CD4-positive, alpha-beta memory T cell (primary cell): ENCODE measurements at regions of chr7 and their contacts with region 1.

Region 1: DNA sequence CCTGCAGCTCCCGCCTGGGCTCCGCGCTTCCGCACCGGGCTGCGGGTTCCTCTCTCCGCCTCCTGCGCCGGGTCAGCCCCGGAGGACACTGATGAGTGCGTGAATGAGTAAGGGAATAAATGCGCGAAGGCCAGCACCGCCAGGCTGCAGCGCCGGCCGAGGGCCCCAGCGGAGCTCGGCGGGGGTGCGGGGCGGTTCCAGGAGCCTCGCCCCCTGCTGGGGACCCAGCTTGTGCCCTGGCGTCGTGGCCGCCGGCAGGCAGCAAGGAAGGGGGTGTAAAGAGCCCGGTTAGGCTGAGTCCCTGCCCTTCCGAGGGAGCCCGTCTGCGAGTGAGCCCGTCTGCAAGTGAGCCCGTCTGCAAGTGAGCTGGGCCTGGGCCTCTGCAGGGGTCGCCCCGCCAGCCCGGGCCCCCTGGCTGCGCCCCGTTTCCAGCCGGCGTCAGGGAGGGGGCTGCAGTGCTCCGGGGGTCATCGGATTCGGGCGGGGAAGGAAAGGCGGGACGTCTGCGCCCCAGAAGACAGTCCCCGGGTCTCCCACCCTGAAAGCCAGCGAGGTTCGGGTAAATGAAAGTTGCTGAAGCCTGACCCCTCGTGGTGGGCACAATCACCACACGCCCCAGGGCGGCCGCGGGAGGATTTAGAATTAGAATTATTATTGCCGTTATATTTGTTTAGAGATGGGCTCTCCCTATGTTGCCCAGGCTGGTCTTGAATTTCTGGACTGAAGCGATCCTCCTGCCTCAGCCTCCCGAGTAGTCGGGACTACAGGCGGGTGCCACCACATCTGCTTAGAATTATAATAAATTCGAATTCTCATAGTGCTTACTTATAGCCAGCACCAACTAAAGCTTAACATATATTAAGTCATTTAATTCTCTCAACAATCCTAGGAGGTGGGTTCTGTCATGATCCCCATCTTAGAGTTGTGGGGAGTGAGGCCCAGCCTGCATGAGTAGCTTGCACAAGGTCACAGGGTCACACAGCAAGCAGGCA is 8.6 kb upstream of the CRYGN start:
- DNase-seq: peak; percentile 77 to 87 (median 84)
- H3K4me3 ChIP-seq: peak overlapping the region; percentile 11 to 70
- H3K4me3 Mint-ChIP-seq: peak overlapping the region; percentile 80 to 92 (median 83)
- H3K27ac ChIP-seq: peak overlapping the region; percentile 58
- H3K27ac Mint-ChIP-seq: peak overlapping the region in 6 of 7 donors; percentile 64 to 82 (median 78)
- H3K4me1 ChIP-seq: peaks cover 4% of the 10 kb centered on the region
- H3K4me1 Mint-ChIP-seq: peaks cover 0 to 24% (median under 1%) of the 10 kb centered on the region in 4 donors
- H3K27me3 ChIP-seq: no peaks in the 10 kb centered on the region
- H3K27me3 Mint-ChIP-seq: peaks cover 0 to 1% of the 10 kb centered on the region in 2 donors

Region 2: GRCh38 chr7:151292850-151293249 is 155.7 kb before region 1 on chr7:
- CTCF ChIA-PET with region 1: no interaction called
- POLR2A ChIA-PET with region 1: no interaction called
- intact Hi-C with region 1: no loop called
- DNase-seq: no peak
- H3K4me3 ChIP-seq: no peak overlapping the region
- H3K4me3 Mint-ChIP-seq: no peak overlapping the region
- H3K27ac ChIP-seq: no peak overlapping the region
- H3K27ac Mint-ChIP-seq: no peak overlapping the region
- H3K4me1 ChIP-seq: no peaks in the 10 kb centered on the region
- H3K4me1 Mint-ChIP-seq: no peaks in the 10 kb centered on the region
- H3K27me3 ChIP-seq: no peaks in the 10 kb centered on the region
- H3K27me3 Mint-ChIP-seq: peaks cover 11 to 15% of the 10 kb centered on the region in 2 donors

Region 3: DNA sequence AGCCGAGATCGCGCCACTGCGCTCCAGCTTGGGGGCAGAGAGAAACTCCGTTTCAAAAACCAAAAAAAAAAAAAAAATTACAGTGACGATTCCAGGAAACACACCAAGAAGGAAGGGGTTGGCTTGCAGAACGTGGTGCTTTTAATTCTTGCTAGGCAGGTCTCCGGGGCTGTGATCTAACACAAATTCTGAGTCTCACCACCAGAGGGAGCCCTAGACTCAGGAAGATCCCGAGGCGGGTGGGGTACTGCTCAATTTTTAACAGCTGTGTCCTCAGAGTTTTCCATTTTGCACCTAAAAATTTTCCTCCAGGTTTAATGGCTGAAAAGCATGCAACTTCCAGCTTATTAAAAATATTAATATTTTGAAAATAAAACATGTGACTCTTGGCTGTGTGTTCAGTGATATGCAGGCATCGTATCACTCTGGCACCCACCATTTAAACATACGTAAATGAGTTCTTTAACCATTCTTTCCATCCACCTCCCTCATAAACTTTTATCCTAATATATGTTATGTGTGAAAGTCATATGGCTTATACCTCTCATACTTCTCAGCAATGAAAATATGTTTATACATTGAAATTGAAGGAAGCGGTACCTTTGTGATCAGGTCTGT is 133.4 kb before region 1 on chr7:
- CTCF ChIA-PET with region 1: interaction called, 121 read pairs
- POLR2A ChIA-PET with region 1: interaction called, 3 read pairs
- intact Hi-C with region 1: loop called (anchors 1 kb)
- DNase-seq: peak; percentile 80 to 82 (median 81)
- H3K4me3 ChIP-seq: no peak overlapping the region
- H3K4me3 Mint-ChIP-seq: peak overlapping the region in 5 of 8 donors; percentile 36 to 69 (median 66)
- H3K27ac ChIP-seq: no peak overlapping the region
- H3K27ac Mint-ChIP-seq: peak overlapping the region in 4 of 7 donors; percentile 38 to 80 (median 74)
- H3K4me1 ChIP-seq: peaks cover 4% of the 10 kb centered on the region
- H3K4me1 Mint-ChIP-seq: peaks cover 2 to 8% (median 5%) of the 10 kb centered on the region in 4 donors
- H3K27me3 ChIP-seq: no peaks in the 10 kb centered on the region
- H3K27me3 Mint-ChIP-seq: peaks cover 0 to 1% of the 10 kb centered on the region in 2 donors

Region 4: DNA sequence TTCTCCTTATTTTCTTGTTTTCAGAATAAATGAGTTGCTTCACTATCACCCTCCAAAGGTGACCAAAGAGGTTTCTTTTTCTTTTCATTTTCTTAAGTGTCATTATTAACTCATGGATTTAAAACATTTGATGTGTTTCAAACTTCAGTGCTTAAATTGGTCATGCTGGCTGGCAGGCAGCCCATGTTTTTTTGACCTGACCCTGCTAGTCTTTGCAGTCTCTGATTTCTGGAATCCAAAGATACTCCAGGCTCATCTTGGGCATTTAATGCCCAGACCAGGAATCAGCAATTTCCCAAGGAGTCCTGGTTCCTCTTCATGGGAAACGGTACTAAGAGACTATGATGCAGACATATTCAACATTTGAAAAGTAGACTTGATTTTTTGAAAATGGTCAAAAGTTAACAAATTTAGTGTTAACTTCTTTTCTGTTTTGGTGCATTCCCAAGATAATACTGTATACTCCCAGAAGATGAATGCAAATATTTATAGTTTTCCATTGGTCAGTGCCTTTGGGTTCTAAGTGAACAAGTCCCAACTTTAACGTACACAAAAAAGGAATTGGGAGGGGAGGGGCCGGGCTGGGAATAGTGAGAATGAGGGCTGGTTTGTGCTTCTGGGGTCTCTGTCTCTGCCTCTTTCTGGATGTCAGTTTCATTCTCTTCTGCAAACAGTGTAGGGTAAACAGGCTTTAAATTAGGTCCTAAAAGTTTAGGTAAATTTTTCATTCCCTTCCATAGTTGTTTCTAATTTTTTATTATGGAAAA is 87.2 kb before region 1 on chr7:
- CTCF ChIA-PET with region 1: interaction called, 398 read pairs
- POLR2A ChIA-PET with region 1: interaction called, 9 read pairs
- intact Hi-C with region 1: no loop called
- DNase-seq: no peak
- H3K4me3 ChIP-seq: no peak overlapping the region
- H3K4me3 Mint-ChIP-seq: no peak overlapping the region
- H3K27ac ChIP-seq: no peak overlapping the region
- H3K27ac Mint-ChIP-seq: peak overlapping the region in 1 of 7 donors; percentile 43
- H3K4me1 ChIP-seq: no peaks in the 10 kb centered on the region
- H3K4me1 Mint-ChIP-seq: peaks cover 0 to 6% (median 2%) of the 10 kb centered on the region in 4 donors
- H3K27me3 ChIP-seq: no peaks in the 10 kb centered on the region
- H3K27me3 Mint-ChIP-seq: no peaks in the 10 kb centered on the region

Region 5: DNA sequence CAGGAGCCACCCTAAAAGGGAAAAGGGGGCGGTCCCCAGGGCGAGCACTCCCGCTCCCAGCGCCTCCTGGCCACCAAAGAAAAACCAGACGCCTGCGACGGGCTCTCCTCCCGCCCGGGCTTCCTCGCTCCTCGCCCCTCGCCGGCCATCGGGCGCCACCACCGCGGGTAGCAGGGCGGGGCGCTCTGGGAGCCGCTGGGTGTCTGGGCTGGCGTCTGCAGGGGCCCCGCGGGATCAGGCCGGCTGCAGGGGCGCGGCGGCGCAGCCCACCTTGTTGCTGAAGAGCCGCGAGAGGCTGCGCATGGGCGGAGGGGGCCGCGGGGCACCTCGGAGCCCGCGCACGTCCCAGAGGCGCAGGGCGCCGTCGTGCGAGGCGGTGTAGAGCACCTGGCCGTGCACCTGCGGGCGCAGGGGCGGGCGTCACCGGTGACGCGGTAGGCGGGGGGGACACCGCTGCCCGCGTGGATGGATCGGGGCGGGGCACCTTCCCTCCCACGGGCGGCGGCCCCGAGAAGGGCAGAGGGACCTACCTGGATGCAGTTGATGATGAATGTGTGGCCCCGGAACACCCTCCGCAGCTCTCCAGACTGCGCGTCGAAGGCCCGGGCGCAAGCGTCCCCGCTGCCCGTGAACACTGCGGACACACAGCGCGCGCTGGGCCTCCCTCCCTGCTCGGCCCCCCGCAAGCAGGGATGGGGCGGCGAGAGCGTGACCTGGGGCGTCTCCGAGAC is 67.0 kb before region 1 on chr7:
- CTCF ChIA-PET with region 1: interaction called, 17 read pairs
- POLR2A ChIA-PET with region 1: interaction called, 3 read pairs
- intact Hi-C with region 1: loop called (anchors 5 kb)
- DNase-seq: peak; percentile 70 to 85 (median 81)
- H3K4me3 ChIP-seq: peak overlapping the region in 1 of 2 donors; percentile 51
- H3K4me3 Mint-ChIP-seq: peak overlapping the region in 6 of 8 donors; percentile 10 to 87 (median 80)
- H3K27ac ChIP-seq: peak overlapping the region; percentile 60
- H3K27ac Mint-ChIP-seq: peak overlapping the region in 4 of 7 donors; percentile 84 to 96 (median 90)
- H3K4me1 ChIP-seq: peaks cover 16% of the 10 kb centered on the region
- H3K4me1 Mint-ChIP-seq: peaks cover 6 to 19% (median 11%) of the 10 kb centered on the region in 4 donors
- H3K27me3 ChIP-seq: peaks cover 6% of the 10 kb centered on the region
- H3K27me3 Mint-ChIP-seq: peaks cover 2 to 6% of the 10 kb centered on the region in 2 donors

Region 6: GRCh38 chr7:151408839-151409666 is 39.5 kb before region 1 on chr7:
- CTCF ChIA-PET with region 1: interaction called, 17 read pairs
- POLR2A ChIA-PET with region 1: interaction called, 17 read pairs
- intact Hi-C with region 1: loop called (anchors 1 kb)
- DNase-seq: peak; percentile 85 to 95 (median 95)
- H3K4me3 ChIP-seq: peak overlapping the region; percentile 9 to 58
- H3K4me3 Mint-ChIP-seq: peak overlapping the region; percentile 79 to 89 (median 84)
- H3K27ac ChIP-seq: peak overlapping the region; percentile 89
- H3K27ac Mint-ChIP-seq: peak overlapping the region; percentile 81 to 99 (median 99)
- H3K4me1 ChIP-seq: peaks cover 41% of the 10 kb centered on the region
- H3K4me1 Mint-ChIP-seq: peaks cover 20 to 80% (median 32%) of the 10 kb centered on the region in 4 donors
- H3K27me3 ChIP-seq: no peaks in the 10 kb centered on the region
- H3K27me3 Mint-ChIP-seq: peaks cover 1 to 3% of the 10 kb centered on the region in 2 donors

Region 7: DNA sequence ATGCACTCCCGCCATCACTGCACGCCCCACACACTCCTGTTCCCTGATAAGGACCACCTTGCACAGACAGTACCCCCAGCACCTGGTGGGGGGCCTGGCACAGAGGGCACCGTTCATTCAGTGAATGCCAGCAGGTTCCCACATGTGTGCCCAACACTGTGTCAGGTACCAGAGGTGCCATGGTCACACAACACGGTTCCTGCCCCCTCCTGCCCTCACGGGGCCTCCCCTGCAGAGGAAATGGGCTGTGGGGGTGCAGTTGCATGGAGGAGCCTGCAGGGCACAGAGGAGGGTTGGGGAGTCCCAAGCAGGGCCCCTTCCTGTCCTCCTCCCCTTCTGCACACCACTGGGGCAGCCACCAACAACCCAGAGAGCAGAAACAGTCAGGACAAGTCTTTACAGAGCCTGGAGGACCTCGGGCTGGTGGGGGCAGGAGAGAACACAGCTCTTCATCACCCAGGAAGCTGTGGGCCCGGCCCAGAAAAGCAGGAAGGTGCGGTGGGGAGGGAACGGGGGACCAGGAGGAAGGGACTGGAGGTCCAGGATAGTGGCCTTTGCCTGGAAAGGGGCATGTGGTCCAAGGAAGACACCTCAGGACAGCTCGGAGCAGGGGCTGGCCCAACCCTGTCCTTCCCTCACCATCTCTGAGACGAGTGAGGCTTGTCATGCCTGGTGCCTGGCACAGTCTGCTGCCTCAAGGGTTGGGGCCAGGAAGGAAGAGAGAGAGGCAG is 15.6 kb before region 1 on chr7:
- CTCF ChIA-PET with region 1: interaction called, 27 read pairs
- POLR2A ChIA-PET with region 1: interaction called, 21 read pairs
- intact Hi-C with region 1: loop called (anchors 1 kb)
- DNase-seq: peak; percentile 54 to 71 (median 63)
- H3K4me3 ChIP-seq: no peak overlapping the region
- H3K4me3 Mint-ChIP-seq: peak overlapping the region; percentile 46 to 85 (median 64)
- H3K27ac ChIP-seq: peak overlapping the region; percentile 58
- H3K27ac Mint-ChIP-seq: peak overlapping the region; percentile 80 to 94 (median 89)
- H3K4me1 ChIP-seq: peaks cover 63% of the 10 kb centered on the region
- H3K4me1 Mint-ChIP-seq: peaks cover 37 to 64% (median 51%) of the 10 kb centered on the region in 4 donors
- H3K27me3 ChIP-seq: no peaks in the 10 kb centered on the region
- H3K27me3 Mint-ChIP-seq: no peaks in the 10 kb centered on the region